ENCODE measurements at regions of chrX and their contacts with region 1.

Region 1: GRCh38 chrX:29318012-29318411 is 730.8 kb downstream of the IL1RAPL1 start:
- DNase-seq: no peak
- H3K4me3 ChIP-seq: no peak overlapping the region
- H3K4me3 Mint-ChIP-seq: no peak overlapping the region
- H3K27ac Mint-ChIP-seq: no peak overlapping the region
- H3K4me1 ChIP-seq: peaks cover 18% of the 10 kb centered on the region
- H3K4me1 Mint-ChIP-seq: peaks cover 9% of the 10 kb centered on the region
- H3K27me3 ChIP-seq: no peaks in the 10 kb centered on the region
- H3K27me3 Mint-ChIP-seq: no peaks in the 10 kb centered on the region
- CTCF ChIP-seq: no peak

Region 2: DNA sequence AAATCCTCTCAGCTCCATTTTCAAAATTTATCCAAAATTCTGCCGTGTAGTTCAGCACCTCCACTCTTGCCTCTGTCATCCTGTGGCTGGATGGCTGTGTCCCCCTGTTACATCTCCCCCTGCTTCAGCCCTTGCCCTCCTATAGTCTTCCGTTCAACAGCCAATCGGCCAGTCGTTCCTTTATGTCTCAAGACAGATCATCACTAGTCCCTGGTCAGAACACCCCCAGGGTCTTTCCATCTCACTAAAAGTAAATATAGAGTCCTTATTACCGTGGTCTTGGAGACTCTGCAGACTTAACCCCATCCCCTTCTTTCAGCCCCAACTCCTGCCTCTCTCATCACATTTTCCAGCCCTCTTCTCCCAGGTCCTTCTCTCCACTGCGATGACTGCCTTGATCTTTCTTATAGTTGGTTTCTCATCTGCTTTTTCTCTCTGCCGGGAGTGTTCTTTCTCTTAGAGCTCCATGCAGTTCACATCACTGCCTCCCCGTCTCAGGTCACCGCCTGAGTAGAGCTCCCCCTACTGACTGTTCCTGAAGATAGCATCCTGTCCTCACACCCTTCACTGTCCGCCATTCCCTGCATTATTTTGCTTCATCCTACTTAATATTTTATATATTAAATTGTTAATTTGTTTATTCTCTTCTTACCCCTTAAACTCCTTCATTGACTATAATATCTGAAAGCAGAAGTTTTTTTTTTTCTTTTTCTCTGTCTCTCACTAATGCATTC is 160.5 kb after region 1 on chrX:
- CTCF ChIA-PET with region 1: no interaction called
- POLR2A ChIA-PET with region 1: no interaction called
- intact Hi-C with region 1: loop called (anchors 10 kb)
- DNase-seq: peak in 1 of 2 experiments; percentile 26
- H3K4me3 ChIP-seq: no peak overlapping the region
- H3K4me3 Mint-ChIP-seq: peak overlapping the region; percentile 44
- H3K27ac Mint-ChIP-seq: no peak overlapping the region
- H3K4me1 ChIP-seq: no peaks in the 10 kb centered on the region
- H3K4me1 Mint-ChIP-seq: peaks cover 9% of the 10 kb centered on the region
- H3K27me3 ChIP-seq: no peaks in the 10 kb centered on the region
- H3K27me3 Mint-ChIP-seq: no peaks in the 10 kb centered on the region
- CTCF ChIP-seq: peak; percentile 37 to 58

Measured in Caco-2 (cell line).